Activated CD8-positive, alpha-beta memory T cell treated with anti-CD3 and anti-CD28 coated beads, Interleukin-2, amount 10 ng/mL, durations not matched to agents 7 days and 5 days (primary cell): ENCODE measurements at regions of chr6 and their contacts with region 1.

Region 1: DNA sequence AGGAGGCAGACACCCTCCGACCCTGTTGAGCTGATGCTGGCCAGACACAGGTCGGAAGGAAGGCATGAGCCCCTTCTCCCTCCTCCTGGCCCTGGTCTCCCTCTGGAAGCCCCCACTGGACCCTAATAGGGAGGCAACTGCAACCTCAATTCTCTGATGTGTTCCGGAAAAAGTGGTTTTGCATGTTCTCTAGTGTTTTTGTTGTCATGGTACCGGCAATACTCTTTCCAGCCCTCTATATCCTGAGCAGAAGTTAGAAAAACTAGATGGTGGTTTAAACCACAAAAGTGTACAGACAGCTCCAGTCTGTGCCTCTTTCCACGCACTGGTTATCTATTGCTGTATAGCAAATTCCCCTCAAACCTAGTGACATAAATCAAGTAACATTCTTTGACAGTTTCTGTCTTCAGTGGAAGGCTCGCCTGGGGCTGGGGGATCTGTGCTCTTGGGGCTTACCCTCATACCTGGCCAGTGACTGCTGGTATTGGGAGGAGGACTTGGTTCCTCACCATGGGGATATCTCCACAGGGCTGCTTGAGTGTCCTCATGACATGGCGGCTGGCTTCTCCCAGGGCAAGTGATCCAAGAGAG is 37.0 kb downstream of the SYTL3 start:
- DNase-seq: peak; percentile 59
- ATAC-seq: peak; percentile 89
- H3K4me3 Mint-ChIP-seq: peak overlapping the region; percentile 30
- H3K27ac Mint-ChIP-seq: peak overlapping the region; percentile 82
- H3K4me1 Mint-ChIP-seq: peaks cover 68% of the 10 kb centered on the region
- H3K27me3 Mint-ChIP-seq: no peaks in the 10 kb centered on the region

Region 2: DNA sequence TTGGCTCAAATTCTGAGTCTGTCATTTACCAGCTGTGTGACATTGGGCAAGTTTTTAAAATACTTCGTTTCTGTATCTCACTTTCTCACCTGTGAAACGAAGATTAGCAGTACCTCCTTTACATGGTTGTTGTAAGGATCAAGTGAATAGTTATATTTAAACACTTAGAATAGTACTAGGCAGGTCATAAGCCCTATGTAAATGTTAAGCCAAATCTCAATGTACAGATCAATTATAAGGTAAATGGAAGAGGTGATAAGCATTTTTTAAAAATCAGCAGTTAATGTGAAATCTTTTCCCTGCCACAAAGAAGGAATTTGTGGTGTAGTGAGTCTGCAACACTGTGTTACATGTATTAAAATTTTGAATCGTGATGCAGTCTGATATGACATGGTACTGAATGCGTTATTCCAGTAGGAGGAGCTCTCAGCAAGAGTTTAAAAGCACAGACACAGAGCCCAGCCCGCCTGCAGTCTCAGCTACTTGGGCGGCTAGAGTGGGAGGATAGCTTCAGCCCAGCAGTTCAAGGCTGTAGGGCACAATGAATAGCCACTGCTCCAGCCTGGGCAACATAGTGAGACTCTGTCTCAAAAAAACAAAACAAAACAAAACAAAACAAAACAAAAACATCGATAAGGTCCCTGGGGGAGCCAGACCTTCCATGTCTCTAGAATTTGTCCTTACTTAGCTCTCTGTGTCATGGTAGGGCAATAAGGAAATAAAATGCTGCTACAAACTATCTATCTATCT is 472.8 kb before region 1 on chr6:
- CTCF ChIA-PET with region 1: interaction called, 23 read pairs
- DNase-seq: peak; percentile 74
- ATAC-seq: peak; percentile 96
- H3K4me3 Mint-ChIP-seq: no peak overlapping the region
- H3K27ac Mint-ChIP-seq: peak overlapping the region; percentile 36
- H3K4me1 Mint-ChIP-seq: peaks cover 22% of the 10 kb centered on the region
- H3K27me3 Mint-ChIP-seq: no peaks in the 10 kb centered on the region

Region 3: DNA sequence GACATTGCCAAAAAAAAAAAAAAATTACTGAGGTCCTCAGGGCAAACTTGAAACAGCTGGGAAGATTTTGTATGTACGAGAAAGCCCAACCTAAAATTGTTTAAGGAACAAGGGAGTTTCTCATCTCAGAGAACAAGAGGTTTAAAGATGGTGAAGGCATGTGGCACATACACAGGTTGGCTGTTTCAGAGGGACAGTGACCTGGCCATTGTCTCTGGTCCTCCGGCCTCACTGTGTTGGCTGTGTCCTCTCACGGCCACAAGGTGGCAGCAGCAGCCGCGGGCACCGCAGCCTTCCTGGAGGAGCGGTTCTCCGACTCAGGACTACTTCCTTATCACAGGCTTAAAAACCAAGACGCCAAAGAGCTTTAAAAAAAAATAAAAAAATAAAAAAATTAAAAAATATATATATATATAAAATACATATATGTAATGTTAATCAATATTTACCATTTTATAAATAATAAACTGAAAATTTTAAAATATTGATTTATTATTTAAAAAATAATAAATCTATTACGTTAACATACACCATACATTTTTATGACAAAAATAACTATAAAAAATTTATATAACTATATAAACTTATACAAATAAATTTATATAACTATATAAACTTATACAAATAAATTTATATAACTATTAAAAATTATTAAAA is 466.0 kb before region 1 on chr6:
- CTCF ChIA-PET with region 1: interaction called, 23 read pairs
- DNase-seq: peak; percentile 83
- ATAC-seq: peak; percentile 99
- H3K4me3 Mint-ChIP-seq: no peak overlapping the region
- H3K27ac Mint-ChIP-seq: no peak overlapping the region
- H3K4me1 Mint-ChIP-seq: peaks cover 4% of the 10 kb centered on the region
- H3K27me3 Mint-ChIP-seq: no peaks in the 10 kb centered on the region

Region 4: DNA sequence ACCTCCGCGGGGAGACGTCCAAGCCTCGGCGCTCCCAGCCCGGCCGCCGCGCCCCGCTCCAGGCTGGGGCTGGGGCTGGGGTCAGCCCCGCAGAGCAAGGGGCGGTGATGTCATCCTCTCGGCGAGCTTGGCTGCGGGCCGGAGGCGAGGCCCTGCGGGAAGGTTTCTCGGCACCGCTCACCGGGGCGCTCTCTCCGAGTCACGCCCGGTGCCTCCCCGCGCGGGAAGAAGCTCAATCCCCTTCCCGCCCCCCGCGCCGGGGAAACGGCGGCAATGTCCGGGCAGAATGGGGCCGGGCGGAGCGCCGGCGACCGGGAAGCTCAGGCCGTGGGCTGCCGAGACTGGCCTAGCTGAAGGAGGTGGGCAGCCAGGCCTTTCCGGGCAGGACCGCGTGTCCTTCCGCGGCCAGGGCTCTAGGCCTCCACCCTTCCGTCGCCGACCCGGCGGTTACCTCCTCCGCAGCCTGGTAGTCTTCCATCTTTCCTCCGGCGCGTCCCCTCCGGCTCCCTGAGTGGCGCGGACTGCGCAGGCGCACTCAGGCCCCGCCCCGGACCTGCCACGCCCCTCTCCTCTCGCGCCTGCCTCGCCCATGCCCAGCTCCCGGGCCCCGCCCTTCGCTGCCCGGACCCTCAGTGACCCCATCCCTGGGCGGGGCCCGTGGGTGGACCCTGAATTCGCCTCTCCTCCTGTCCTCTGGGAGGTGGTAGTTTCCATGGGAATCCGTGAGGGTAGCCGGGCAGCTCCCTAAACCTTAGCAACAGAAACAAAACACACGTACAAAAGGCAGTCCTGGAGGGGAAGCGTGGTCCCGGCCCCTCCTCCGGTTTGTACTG is 42.4 kb before region 1 on chr6 and contains the start of gene DYNLT1:
- CTCF ChIA-PET with region 1: interaction called, 19 read pairs
- DNase-seq: peak; percentile 93
- ATAC-seq: peak; percentile 73
- H3K4me3 Mint-ChIP-seq: peak within 1 kb of the TSS; percentile 100
- H3K27ac Mint-ChIP-seq: peak within 1 kb of the TSS; percentile 97
- H3K4me1 Mint-ChIP-seq: peaks cover 70% of the 10 kb centered on the region
- H3K27me3 Mint-ChIP-seq: no peaks in the 10 kb centered on the region
- total RNA-seq, gene DYNLT1: 109 to 120 TPM

Region 5: GRCh38 chr6:158660333-158660754 is 26.5 kb before region 1 on chr6:
- CTCF ChIA-PET with region 1: interaction called, 75 read pairs
- DNase-seq: peak; percentile 61
- ATAC-seq: peak; percentile 70
- H3K4me3 Mint-ChIP-seq: no peak overlapping the region
- H3K27ac Mint-ChIP-seq: peak overlapping the region; percentile 40
- H3K4me1 Mint-ChIP-seq: peaks cover 45% of the 10 kb centered on the region
- H3K27me3 Mint-ChIP-seq: no peaks in the 10 kb centered on the region

Region 6: DNA sequence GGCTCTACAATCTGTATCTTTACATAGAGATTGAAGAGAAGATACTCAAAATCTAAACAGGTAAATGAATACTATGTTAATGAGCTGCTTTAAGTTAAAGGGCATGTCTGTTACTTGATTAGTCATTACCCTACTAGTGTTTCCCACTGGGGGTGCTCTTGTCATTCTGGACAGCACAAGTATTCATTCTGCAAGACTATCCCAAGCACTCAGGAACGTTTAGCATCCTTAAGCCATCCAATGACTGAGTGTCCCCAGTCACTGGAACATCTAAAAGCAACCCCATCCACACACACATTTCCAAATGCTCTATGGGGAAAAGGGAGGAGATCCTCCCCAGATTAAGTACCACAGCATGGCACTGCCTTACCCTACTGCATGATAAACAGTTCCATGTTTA is 106.5 kb after region 1 on chr6:
- CTCF ChIA-PET with region 1: interaction called, 10 read pairs
- DNase-seq: no peak
- ATAC-seq: peak; percentile 56
- H3K4me3 Mint-ChIP-seq: no peak overlapping the region
- H3K27ac Mint-ChIP-seq: peak overlapping the region; percentile 32
- H3K4me1 Mint-ChIP-seq: peaks cover 84% of the 10 kb centered on the region
- H3K27me3 Mint-ChIP-seq: no peaks in the 10 kb centered on the region